ENCODE measurements at regions of chr6 and their contacts with region 1.

Region 1: DNA sequence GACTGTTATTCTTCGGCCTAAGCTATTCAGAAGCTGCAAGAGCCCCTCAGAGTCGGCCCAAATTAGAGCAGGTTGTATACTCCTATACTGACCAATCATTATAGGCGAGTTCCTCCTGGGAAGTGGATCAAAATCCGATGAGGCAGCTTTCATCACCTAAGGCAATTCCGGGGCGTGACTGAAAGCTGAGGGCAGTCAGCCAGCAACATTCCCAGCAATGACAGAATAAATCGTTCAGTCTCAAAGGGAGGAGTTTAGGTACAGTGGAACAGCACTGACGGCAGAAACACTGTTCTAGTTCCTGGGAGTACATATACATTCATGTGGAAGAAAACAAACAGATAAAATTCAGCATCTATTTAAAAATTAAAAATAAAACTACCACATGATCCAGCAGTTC is 10.8 kb downstream of the HLA-DQB2 start:
- DNase-seq: no peak
- H3K4me3 ChIP-seq: no peak overlapping the region
- H3K27ac ChIP-seq: no peak overlapping the region
- H3K27me3 ChIP-seq: no peaks in the 10 kb centered on the region
- CTCF ChIP-seq: no peak

Region 2: GRCh38 chr6:32666420-32667300 is 85.9 kb before region 1 on chr6 and contains the start of gene HLA-DQB1:
- in situ Hi-C with region 1: loop called (anchors 10 kb)
- DNase-seq: no peak
- H3K4me3 ChIP-seq: no peak within 1 kb of the TSS
- H3K27ac ChIP-seq: no peak within 1 kb of the TSS
- H3K27me3 ChIP-seq: no peaks in the 10 kb centered on the region
- CTCF ChIP-seq: no peak

Measured in brain microvascular endothelial cell (primary cell).